ENCODE measurements at regions of chr10 and their contacts with region 1.

Region 1: GRCh38 chr10:22436884-22437619 is 91.8 kb downstream of the SPAG6 start:
- DNase-seq: peak; percentile 84 to 91 (median 88)
- H3K4me3 ChIP-seq: peak overlapping the region; percentile 48 to 93 (median 80)
- H3K27ac ChIP-seq: peak overlapping the region; percentile 78 to 99 (median 98)
- H3K27me3 ChIP-seq: no peaks in the 10 kb centered on the region
- CTCF ChIP-seq: peak in 43 of 56 donors; percentile 9 to 55 (median 31)

Region 2: DNA sequence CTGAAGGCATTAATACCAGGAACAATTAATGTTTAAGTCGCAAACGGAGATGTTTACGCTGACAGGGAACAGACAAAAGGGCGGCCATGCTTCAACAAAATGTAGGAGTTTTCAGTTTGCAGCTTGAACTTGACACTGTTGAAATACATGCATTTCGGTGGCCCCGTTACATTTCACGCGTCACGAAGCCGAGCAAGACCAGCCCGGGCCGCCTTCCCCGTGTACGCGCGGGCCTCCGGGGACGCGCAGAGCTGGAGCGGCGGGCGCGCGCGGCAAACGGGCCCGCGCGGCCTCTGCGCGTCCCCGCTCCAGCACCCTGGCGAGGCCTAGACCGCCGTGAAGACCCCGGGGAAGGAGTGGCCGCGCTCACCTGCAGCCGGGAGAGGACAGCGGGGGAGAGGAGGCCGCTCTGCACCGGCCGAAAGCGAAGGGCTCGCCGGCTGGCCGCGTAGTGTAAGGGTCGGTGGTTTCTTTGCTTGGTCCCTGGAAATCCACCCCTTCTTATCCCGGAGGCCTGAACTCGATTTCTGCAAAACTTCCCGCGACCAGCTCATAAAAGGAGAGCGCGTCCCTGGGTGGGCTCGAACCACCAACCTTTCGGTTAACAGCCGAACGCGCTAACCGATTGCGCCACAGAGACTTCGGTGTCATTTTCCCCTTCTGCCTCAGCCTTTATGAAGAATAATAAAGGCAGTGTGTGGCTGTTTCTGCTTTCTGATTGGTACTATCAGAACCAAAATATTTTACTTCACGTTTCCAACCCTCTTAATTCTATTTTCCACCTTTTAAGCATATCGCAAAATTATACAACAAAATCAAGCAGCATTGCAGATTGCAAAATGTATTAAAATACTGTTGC is 207.9 kb before region 1 on chr10:
- intact Hi-C with region 1: loop called in 1 of 2 experiments (anchors 10 kb)
- DNase-seq: peak; percentile 76 to 91 (median 84)
- H3K4me3 ChIP-seq: peak overlapping the region; percentile 55 to 93 (median 78)
- H3K27ac ChIP-seq: peak overlapping the region; percentile 73 to 100 (median 98)
- H3K27me3 ChIP-seq: no peaks in the 10 kb centered on the region
- CTCF ChIP-seq: peak in 15 of 56 donors; percentile 4 to 34 (median 15)

Region 3: GRCh38 chr10:22316285-22317120 is 120.5 kb before region 1 on chr10 and contains the start of gene COMMD3:
- intact Hi-C with region 1: loop called (anchors 5 kb)
- DNase-seq: peak; percentile 78 to 91 (median 88)
- H3K4me3 ChIP-seq: peak within 1 kb of the TSS; percentile 63 to 98 (median 90)
- H3K27ac ChIP-seq: peak within 1 kb of the TSS; percentile 90 to 99 (median 97)
- H3K27me3 ChIP-seq: no peaks in the 10 kb centered on the region
- CTCF ChIP-seq: peak in 2 of 56 donors; percentile 2 to 25
- total RNA-seq, gene COMMD3: 26.2 to 65.4 (median 41.7) TPM

Region 4: GRCh38 chr10:22475651-22476600 is 38.9 kb after region 1 on chr10:
- intact Hi-C with region 1: loop called (anchors 2 to 5 kb)
- DNase-seq: peak in 9 of 10 donors; percentile 40 to 74 (median 52)
- H3K4me3 ChIP-seq: peak overlapping the region; percentile 44 to 86 (median 66)
- H3K27ac ChIP-seq: peak overlapping the region in 50 of 59 donors; percentile 3 to 94 (median 66)
- H3K27me3 ChIP-seq: peaks cover 0 to 39% (median 2%) of the 10 kb centered on the region in 45 donors
- CTCF ChIP-seq: peak in 7 of 56 donors; percentile 4 to 34 (median 12)

Region 5: GRCh38 chr10:22550732-22551131 is 113.7 kb after region 1 on chr10:
- intact Hi-C with region 1: loop called in 1 of 2 experiments (anchors 5 kb)
- DNase-seq: peak in 5 of 10 donors; percentile 8 to 58 (median 54)
- H3K4me3 ChIP-seq: no peak overlapping the region
- H3K27ac ChIP-seq: peak overlapping the region in 26 of 59 donors; percentile 1 to 93 (median 38)
- H3K27me3 ChIP-seq: no peaks in the 10 kb centered on the region
- CTCF ChIP-seq: peak in 55 of 56 donors; percentile 30 to 71 (median 55)

Region 6: DNA sequence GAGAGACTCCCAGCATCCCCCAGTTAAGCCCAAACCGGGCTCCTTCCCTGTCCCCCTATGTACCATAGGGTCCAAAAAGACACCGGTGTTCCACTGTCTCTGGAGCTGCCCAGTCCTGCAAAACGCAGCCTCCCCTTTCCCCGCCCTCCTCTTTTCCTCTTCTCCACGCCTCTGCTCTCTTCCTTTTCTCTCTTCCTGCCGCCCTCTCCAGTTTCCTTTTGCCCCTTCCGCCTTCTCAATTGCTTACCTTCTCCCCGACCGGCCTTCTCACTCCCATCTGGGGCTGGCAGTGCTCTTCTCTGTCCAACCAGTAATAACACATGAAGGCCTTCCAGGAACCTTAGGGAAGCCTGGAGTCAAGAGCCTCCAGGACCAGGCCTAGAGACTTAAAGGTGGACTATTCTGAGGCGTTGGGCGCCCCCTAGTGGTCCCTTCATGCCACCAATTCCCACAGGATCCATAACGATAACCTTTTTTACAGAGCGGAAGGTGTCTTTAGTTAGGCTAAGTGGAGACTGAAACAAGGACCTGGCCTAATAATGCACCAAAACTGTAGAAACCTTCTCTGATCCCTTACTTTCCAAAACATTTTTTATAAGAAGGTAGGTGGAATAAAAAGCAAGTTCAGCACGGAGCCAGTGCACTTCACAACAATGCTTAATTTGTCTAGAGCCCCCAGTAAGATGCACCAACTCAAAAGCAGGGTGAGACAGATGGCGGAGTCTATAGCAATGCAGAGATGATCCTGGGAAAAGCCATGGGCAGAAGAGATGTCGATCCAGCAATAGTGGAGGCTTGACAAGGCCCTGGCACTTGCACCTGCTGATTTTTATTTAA is 631.1 kb after region 1 on chr10:
- intact Hi-C with region 1: loop called in 1 of 2 experiments (anchors 10 kb)
- DNase-seq: peak; percentile 63 to 89 (median 80)
- H3K4me3 ChIP-seq: no peak overlapping the region
- H3K27ac ChIP-seq: peak overlapping the region in 23 of 59 donors; percentile 2 to 79 (median 40)
- H3K27me3 ChIP-seq: no peaks in the 10 kb centered on the region
- CTCF ChIP-seq: peak; percentile 65 to 96 (median 85)